Naive thymus-derived CD4-positive, alpha-beta T cell (primary cell): ENCODE measurements at regions of chr19 and their contacts with region 1.

Region 1: DNA sequence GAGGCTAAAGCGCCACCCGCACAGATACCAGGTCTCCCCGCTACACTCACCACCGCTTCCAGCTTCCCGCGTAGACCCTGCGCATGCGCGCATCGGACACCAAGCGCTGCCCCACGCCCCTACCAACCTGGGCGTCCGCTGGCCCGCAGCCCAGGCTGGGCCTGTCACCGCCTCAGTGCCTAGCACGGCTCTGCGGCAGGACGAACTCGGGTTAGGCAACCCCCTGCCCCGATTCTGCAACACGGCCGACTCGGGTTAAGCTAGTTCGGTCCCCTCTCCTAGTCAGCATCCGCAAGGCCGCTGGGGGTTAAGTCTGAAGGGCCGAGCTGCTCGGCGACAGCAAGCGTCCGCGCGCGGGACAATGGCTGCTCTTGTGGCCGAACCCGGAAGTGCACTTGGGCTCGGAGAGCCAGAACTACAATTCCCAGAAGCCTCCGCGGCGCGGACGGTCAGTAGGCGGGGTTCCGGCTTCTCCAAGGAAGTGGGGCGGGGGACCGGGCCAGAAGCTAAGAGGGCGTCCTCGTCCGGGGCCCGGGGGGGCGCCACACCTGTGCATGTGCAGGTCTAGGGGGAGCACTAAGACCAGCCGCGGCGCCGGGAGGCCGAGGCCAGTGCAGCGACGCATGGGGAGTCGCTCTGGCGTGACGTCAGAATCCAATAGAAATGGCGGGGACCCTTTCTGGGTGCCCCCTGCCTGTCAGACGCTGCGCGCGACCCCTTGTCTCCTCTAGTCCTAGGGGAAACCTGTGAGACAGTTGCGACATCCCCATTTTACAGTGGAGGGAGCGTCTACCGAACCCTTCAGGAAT is at the start of gene ZNF180:
- DNase-seq: peak; percentile 89 to 96 (median 93)
- ATAC-seq: peak; percentile 96
- H3K4me3 ChIP-seq: peak within 1 kb of the TSS; percentile 100
- H3K4me3 Mint-ChIP-seq: peak within 1 kb of the TSS; percentile 91 to 98 (median 96)
- H3K27ac ChIP-seq: peak within 1 kb of the TSS; percentile 84
- H3K27ac Mint-ChIP-seq: peak within 1 kb of the TSS; percentile 82 to 94 (median 92)
- H3K4me1 ChIP-seq: peaks cover 13 to 19% of the 10 kb centered on the region in 2 donors
- H3K4me1 Mint-ChIP-seq: peaks cover 29 to 45% (median 34%) of the 10 kb centered on the region in 7 donors
- H3K27me3 ChIP-seq: peaks cover 0 to 2% of the 10 kb centered on the region in 2 donors
- H3K27me3 Mint-ChIP-seq: peaks cover 7 to 18% (median 13%) of the 10 kb centered on the region in 5 donors
- total RNA-seq, gene ZNF180: 7.5 to 17.7 (median 10.6) TPM

Region 2: GRCh38 chr19:44212250-44212865 is 288.0 kb before region 1 on chr19 and contains the start of gene ZNF227:
- CTCF ChIA-PET with region 1: no interaction called
- POLR2A ChIA-PET with region 1: no interaction called
- intact Hi-C with region 1: loop called (anchors 1 kb)
- DNase-seq: peak; percentile 47 to 80 (median 75)
- ATAC-seq: peak; percentile 98
- H3K4me3 ChIP-seq: peak within 1 kb of the TSS; percentile 98
- H3K4me3 Mint-ChIP-seq: peak within 1 kb of the TSS; percentile 85 to 100 (median 96)
- H3K27ac ChIP-seq: peak within 1 kb of the TSS; percentile 81
- H3K27ac Mint-ChIP-seq: peak within 1 kb of the TSS; percentile 82 to 97 (median 92)
- H3K4me1 ChIP-seq: peaks cover 0 to 15% of the 10 kb centered on the region in 2 donors
- H3K4me1 Mint-ChIP-seq: peaks cover 19 to 45% (median 31%) of the 10 kb centered on the region in 7 donors
- H3K27me3 ChIP-seq: no peaks in the 10 kb centered on the region
- H3K27me3 Mint-ChIP-seq: peaks cover 0 to 4% (median 0%) of the 10 kb centered on the region in 5 donors
- total RNA-seq, gene ZNF227: 18.3 to 51.5 (median 30.0) TPM

Region 3: GRCh38 chr19:44401139-44402115 is 98.9 kb before region 1 on chr19 and contains the start of gene ZNF285:
- CTCF ChIA-PET with region 1: no interaction called
- POLR2A ChIA-PET with region 1: no interaction called
- intact Hi-C with region 1: loop called (anchors 1 kb)
- DNase-seq: peak; percentile 48 to 79 (median 63)
- ATAC-seq: peak; percentile 92
- H3K4me3 ChIP-seq: peak within 1 kb of the TSS; percentile 57
- H3K4me3 Mint-ChIP-seq: peak within 1 kb of the TSS; percentile 90 to 100 (median 92)
- H3K27ac ChIP-seq: no peak within 1 kb of the TSS
- H3K27ac Mint-ChIP-seq: peak within 1 kb of the TSS; percentile 14 to 94 (median 68)
- H3K4me1 ChIP-seq: no peaks in the 10 kb centered on the region
- H3K4me1 Mint-ChIP-seq: peaks cover 4 to 14% (median 6%) of the 10 kb centered on the region in 7 donors
- H3K27me3 ChIP-seq: no peaks in the 10 kb centered on the region
- H3K27me3 Mint-ChIP-seq: peaks cover 0 to 20% (median 8%) of the 10 kb centered on the region in 5 donors
- total RNA-seq, gene ZNF285: 0.10 to 4.8 (median 0.90) TPM

Region 4: DNA sequence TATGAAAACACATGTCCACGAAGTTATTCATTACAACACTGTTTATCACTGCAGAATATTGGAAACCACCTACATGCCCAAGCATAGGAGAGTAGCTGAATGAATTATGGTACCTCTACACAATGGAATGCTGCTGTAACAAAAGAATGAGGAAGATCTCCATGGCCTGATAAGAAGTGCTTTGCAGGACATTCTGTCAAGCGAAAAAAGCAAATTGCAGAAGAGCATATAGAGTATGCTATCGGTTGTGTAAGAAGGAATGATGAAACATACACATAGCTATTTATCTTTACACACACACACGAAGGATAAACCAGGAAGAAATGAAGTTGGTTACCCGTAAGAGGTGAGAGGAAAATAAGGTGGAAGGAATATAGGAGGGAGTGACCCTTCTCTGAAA is 66.6 kb after region 1 on chr19:
- CTCF ChIA-PET with region 1: no interaction called
- POLR2A ChIA-PET with region 1: no interaction called
- intact Hi-C with region 1: no loop called
- DNase-seq: no peak
- ATAC-seq: no peak
- H3K4me3 ChIP-seq: no peak overlapping the region
- H3K4me3 Mint-ChIP-seq: no peak overlapping the region
- H3K27ac ChIP-seq: no peak overlapping the region
- H3K27ac Mint-ChIP-seq: no peak overlapping the region
- H3K4me1 ChIP-seq: no peaks in the 10 kb centered on the region
- H3K4me1 Mint-ChIP-seq: no peaks in the 10 kb centered on the region
- H3K27me3 ChIP-seq: no peaks in the 10 kb centered on the region
- H3K27me3 Mint-ChIP-seq: peaks cover 0 to 43% (median 32%) of the 10 kb centered on the region in 5 donors